ENCODE measurements at regions of chr6 and their contacts with region 1.

Region 1: GRCh38 chr6:26439657-26440056 is 647 bp upstream of the BTN3A3 start:
- DNase-seq: no peak
- H3K4me3 ChIP-seq: peak overlapping the region; percentile 29 to 79 (median 64)
- H3K27ac ChIP-seq: peak overlapping the region in 55 of 59 donors; percentile 2 to 93 (median 77)
- H3K27me3 ChIP-seq: no peaks in the 10 kb centered on the region
- CTCF ChIP-seq: no peak

Region 2: DNA sequence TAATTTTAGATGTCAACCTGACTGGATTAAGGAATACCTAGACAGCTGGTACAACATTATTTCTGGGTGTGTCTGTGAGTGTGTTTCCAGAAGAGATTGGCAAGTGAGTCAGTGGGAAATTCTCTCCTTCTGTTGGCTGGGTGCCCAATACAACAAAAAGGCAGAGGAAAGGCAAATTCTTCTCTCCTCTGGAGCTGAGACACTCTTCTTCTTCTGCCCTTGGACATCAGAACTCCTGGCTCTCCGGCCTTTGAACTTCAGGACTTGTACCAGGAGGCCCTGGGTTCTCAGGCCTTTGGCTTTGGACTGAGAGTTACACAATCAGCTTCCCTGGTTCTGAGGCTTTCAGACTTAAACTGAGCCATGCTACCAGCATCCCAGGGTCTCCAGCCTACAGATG is 45.4 kb before region 1 on chr6:
- intact Hi-C with region 1: no loop called
- DNase-seq: no peak
- H3K4me3 ChIP-seq: no peak overlapping the region
- H3K27ac ChIP-seq: no peak overlapping the region
- H3K27me3 ChIP-seq: no peaks in the 10 kb centered on the region
- CTCF ChIP-seq: no peak

Region 3: GRCh38 chr6:26457806-26458688 is 18.4 kb after region 1 on chr6 and contains the start of gene BTN2A1:
- intact Hi-C with region 1: loop called in 1 of 2 experiments (anchors 2 kb)
- DNase-seq: peak; percentile 51 to 94 (median 84)
- H3K4me3 ChIP-seq: peak within 1 kb of the TSS; percentile 44 to 95 (median 82)
- H3K27ac ChIP-seq: peak within 1 kb of the TSS; percentile 12 to 97 (median 89)
- H3K27me3 ChIP-seq: no peaks in the 10 kb centered on the region
- CTCF ChIP-seq: peak in 17 of 56 donors; percentile 5 to 39 (median 23)
- total RNA-seq, gene BTN2A1: 16.0 to 33.4 (median 24.3) TPM

Measured in dorsolateral prefrontal cortex (tissue), 120 donors.